ENCODE measurements at regions of chr12 and their contacts with region 1.

Region 1: GRCh38 chr12:104456417-104456949 is at the start of gene CHST11:
- DNase-seq: peak in 8 of 9 donors; percentile 33 to 84 (median 60)
- ATAC-seq: peak; percentile 83
- H3K4me3 ChIP-seq: peak within 1 kb of the TSS; percentile 83
- H3K4me3 Mint-ChIP-seq: peak within 1 kb of the TSS; percentile 75 to 100 (median 99)
- H3K27ac ChIP-seq: peak within 1 kb of the TSS; percentile 85
- H3K27ac Mint-ChIP-seq: peak within 1 kb of the TSS; percentile 84 to 99 (median 95)
- H3K4me1 ChIP-seq: peaks cover 25% of the 10 kb centered on the region in 2 donors
- H3K4me1 Mint-ChIP-seq: peaks cover 19 to 47% (median 36%) of the 10 kb centered on the region in 7 donors
- H3K27me3 ChIP-seq: no peaks in the 10 kb centered on the region
- H3K27me3 Mint-ChIP-seq: peaks cover 0 to 7% (median 0%) of the 10 kb centered on the region in 5 donors
- total RNA-seq, gene CHST11: 31.9 to 74.3 (median 42.0) TPM

Region 2: DNA sequence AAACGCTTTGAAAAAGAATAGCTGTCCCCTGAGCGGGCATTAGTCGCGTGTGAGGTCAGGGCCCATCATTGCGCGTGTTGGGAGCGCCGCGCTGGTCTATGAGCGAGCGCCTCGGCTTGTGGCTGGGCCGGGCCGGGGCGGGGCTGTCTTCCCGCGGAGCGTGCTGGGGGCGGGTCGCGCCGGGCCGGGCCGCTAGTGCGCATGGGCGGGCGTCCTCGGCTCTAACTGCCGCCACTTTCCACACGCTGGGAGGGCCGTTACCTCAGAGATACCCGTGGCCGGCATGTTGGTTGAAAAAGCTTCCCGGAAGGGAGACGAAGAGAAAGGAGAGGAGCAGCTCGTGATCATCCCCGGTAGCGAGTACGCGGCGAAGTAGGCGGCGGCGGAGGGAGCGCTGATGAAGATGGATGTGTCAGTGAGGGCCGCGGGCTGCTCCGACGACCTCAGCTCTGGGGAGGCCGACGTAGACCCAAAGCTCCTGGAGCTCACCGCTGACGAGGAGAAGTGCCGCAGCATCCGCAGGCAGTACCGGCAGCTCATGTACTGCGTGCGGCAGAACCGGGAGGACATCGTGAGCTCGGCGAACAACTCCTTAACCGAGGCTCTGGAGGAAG is 152.8 kb before region 1 on chr12 and contains the start of gene EID3:
- CTCF ChIA-PET with region 1: no interaction called
- POLR2A ChIA-PET with region 1: no interaction called
- intact Hi-C with region 1: loop called in 1 of 2 experiments (anchors 2 kb)
- DNase-seq: peak; percentile 86 to 96 (median 91)
- ATAC-seq: peak; percentile 99
- H3K4me3 ChIP-seq: peak within 1 kb of the TSS; percentile 56
- H3K4me3 Mint-ChIP-seq: peak within 1 kb of the TSS; percentile 87 to 99 (median 96)
- H3K27ac ChIP-seq: peak within 1 kb of the TSS; percentile 84
- H3K27ac Mint-ChIP-seq: peak within 1 kb of the TSS; percentile 91 to 99 (median 97)
- H3K4me1 ChIP-seq: peaks cover 7 to 24% of the 10 kb centered on the region in 2 donors
- H3K4me1 Mint-ChIP-seq: peaks cover 35 to 72% (median 56%) of the 10 kb centered on the region in 7 donors
- H3K27me3 ChIP-seq: no peaks in the 10 kb centered on the region
- H3K27me3 Mint-ChIP-seq: no peaks in the 10 kb centered on the region
- total RNA-seq, gene EID3: 8.2 to 11.8 (median 10.4) TPM

Region 3: GRCh38 chr12:104485651-104486362 is 29.3 kb after region 1 on chr12:
- CTCF ChIA-PET with region 1: interaction called, 3 read pairs
- POLR2A ChIA-PET with region 1: interaction called, 50 read pairs
- intact Hi-C with region 1: loop called in 1 of 2 experiments (anchors 1 kb)
- DNase-seq: peak in 7 of 9 donors; percentile 58 to 78 (median 69)
- ATAC-seq: peak; percentile 80
- H3K4me3 ChIP-seq: peak overlapping the region; percentile 39
- H3K4me3 Mint-ChIP-seq: peak overlapping the region; percentile 59 to 84 (median 72)
- H3K27ac ChIP-seq: peak overlapping the region; percentile 22
- H3K27ac Mint-ChIP-seq: peak overlapping the region; percentile 73 to 93 (median 90)
- H3K4me1 ChIP-seq: peaks cover 68 to 79% of the 10 kb centered on the region in 2 donors
- H3K4me1 Mint-ChIP-seq: peaks cover 70 to 97% (median 90%) of the 10 kb centered on the region in 7 donors
- H3K27me3 ChIP-seq: no peaks in the 10 kb centered on the region
- H3K27me3 Mint-ChIP-seq: no peaks in the 10 kb centered on the region

Region 4: GRCh38 chr12:104569346-104570173 is 113.1 kb after region 1 on chr12:
- CTCF ChIA-PET with region 1: interaction called, 3 read pairs
- POLR2A ChIA-PET with region 1: no interaction called
- intact Hi-C with region 1: loop called (anchors 1 to 5 kb)
- DNase-seq: peak in 6 of 9 donors; percentile 7 to 41 (median 24)
- ATAC-seq: peak; percentile 91
- H3K4me3 ChIP-seq: peak overlapping the region; percentile 14
- H3K4me3 Mint-ChIP-seq: peak overlapping the region; percentile 18 to 76 (median 61)
- H3K27ac ChIP-seq: no peak overlapping the region
- H3K27ac Mint-ChIP-seq: peak overlapping the region; percentile 11 to 89 (median 45)
- H3K4me1 ChIP-seq: peaks cover 13 to 34% of the 10 kb centered on the region in 2 donors
- H3K4me1 Mint-ChIP-seq: peaks cover 33 to 72% (median 49%) of the 10 kb centered on the region in 7 donors
- H3K27me3 ChIP-seq: no peaks in the 10 kb centered on the region
- H3K27me3 Mint-ChIP-seq: no peaks in the 10 kb centered on the region

Region 5: DNA sequence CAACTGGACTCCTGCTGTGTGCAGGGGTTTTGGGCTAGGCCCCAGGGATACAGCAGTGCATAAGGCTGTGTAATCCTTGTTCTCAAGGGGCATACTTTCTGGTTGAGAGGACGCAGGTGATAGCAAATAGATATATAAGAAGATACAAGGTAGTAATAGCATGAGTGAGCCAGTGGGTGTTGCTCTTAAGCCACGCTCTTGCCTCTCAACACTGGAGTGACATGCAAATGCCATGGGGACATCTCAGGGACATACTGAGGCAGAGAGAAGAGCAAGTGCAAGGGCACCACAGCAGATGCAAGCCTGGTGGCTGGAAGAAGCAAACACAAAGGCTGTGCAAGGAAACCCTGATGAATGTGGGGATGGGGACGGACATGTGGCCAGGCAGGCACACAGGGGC is 223.6 kb after region 1 on chr12:
- CTCF ChIA-PET with region 1: interaction called, 3 read pairs
- POLR2A ChIA-PET with region 1: no interaction called
- intact Hi-C with region 1: loop called in 1 of 2 experiments (anchors 2 kb)
- DNase-seq: peak in 7 of 9 donors; percentile 15 to 51 (median 30)
- ATAC-seq: peak; percentile 44
- H3K4me3 ChIP-seq: no peak overlapping the region
- H3K4me3 Mint-ChIP-seq: peak overlapping the region in 3 of 10 donors; percentile 16 to 36 (median 26)
- H3K27ac ChIP-seq: no peak overlapping the region
- H3K27ac Mint-ChIP-seq: peak overlapping the region in 3 of 9 donors; percentile 15 to 80 (median 26)
- H3K4me1 ChIP-seq: peaks cover 25 to 46% of the 10 kb centered on the region in 2 donors
- H3K4me1 Mint-ChIP-seq: peaks cover 36 to 80% (median 46%) of the 10 kb centered on the region in 7 donors
- H3K27me3 ChIP-seq: no peaks in the 10 kb centered on the region
- H3K27me3 Mint-ChIP-seq: no peaks in the 10 kb centered on the region

Region 6: GRCh38 chr12:104958009-104958945 is 501.8 kb after region 1 on chr12 and contains the start of gene SLC41A2:
- CTCF ChIA-PET with region 1: no interaction called
- POLR2A ChIA-PET with region 1: no interaction called
- intact Hi-C with region 1: loop called (anchors 1 to 2 kb)
- DNase-seq: peak; percentile 55 to 87 (median 74)
- ATAC-seq: peak; percentile 93
- H3K4me3 ChIP-seq: peak within 1 kb of the TSS; percentile 77
- H3K4me3 Mint-ChIP-seq: peak within 1 kb of the TSS; percentile 91 to 98 (median 96)
- H3K27ac ChIP-seq: peak within 1 kb of the TSS; percentile 59
- H3K27ac Mint-ChIP-seq: peak within 1 kb of the TSS; percentile 65 to 93 (median 89)
- H3K4me1 ChIP-seq: peaks cover 6 to 9% of the 10 kb centered on the region in 2 donors
- H3K4me1 Mint-ChIP-seq: peaks cover 8 to 29% (median 26%) of the 10 kb centered on the region in 7 donors
- H3K27me3 ChIP-seq: peaks cover 0 to 3% of the 10 kb centered on the region in 2 donors
- H3K27me3 Mint-ChIP-seq: peaks cover 5 to 49% (median 7%) of the 10 kb centered on the region in 5 donors
- total RNA-seq, gene SLC41A2: 2.0 to 12.7 (median 2.6) TPM